ENCODE measurements at regions of chr1 and their contacts with region 1.

Region 1: DNA sequence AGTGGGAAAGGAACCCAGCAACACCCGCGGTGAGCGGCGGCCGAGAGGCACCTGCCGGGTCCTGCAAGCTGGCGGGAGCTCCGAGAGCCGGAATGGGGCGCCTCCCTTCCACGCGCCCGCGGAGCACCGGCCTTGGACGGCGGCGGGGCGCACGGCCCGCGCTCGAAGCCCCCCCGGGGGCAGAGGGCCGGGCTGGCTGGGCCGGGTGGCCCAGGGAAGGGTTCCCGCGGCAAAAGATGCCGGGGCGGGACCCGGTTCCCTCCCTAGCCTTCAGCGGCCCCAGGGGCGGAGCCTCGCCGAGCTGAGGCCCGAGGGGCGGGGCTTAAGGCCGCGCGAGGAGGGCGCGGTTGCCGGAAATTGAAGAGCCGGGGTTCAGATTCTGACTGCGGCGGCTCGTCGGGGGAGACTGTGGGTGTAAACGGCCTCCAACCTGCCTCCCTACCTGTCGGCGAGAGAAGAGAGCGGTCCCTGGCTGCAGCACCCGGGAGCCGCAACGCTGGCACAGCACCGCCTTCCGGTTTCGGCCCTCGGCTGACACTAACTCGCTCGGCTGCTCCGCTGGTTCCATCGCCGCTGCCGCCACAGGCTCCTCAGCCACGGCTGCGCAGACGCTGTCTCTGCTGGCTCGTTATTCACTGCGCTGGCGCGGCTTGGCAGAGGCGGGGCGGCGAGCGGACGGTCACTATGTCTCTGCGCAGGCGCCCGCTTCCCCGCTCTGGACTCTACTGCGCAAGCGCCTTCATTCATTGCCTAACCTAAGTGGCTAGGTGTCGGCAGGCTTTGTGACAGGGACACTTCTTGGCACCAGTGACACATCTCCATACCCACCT is at the start of gene RABIF:
- DNase-seq: peak; percentile 99
- ATAC-seq: peak; percentile 99
- total RNA-seq, gene RABIF: 6.1 TPM

Region 2: DNA sequence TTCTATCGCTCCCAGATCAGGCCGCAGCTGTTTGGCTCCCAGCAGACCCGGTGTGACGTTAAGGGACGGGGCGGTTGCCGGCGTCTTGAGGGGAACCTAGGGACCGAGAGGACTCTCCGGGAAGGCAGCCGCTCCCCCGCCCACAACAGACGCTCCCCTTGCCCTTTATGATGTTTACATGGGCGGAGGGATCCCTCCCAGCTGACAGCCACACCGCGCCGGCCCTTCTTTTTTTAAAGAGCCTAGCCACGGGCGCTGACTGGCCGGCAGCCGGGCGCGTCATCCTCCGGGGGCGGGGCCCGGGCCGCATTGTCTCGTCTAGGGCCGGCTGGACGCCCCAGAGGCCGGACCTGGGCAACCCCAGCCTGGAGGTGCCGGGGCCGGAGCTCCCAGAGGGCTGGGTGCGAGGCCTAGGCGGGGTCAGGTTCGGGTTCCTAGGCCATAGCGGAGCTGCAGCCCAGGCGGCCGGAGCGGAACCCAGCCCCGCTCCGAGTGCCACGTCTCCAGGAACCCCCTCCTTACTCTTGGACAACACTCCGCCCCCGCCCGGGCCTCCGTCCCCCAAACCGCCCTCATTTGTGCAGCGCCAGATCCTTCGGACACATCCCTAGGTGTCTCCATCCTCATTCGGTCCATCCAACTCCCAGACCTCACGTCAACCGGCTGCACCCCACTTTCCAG is 78.0 kb before region 1 on chr1 and contains the start of gene PCAT6:
- intact Hi-C with region 1: loop called (anchors 2 kb)
- DNase-seq: peak; percentile 97
- ATAC-seq: peak; percentile 96
- total RNA-seq, gene PCAT6: 0.54 TPM

Region 3: GRCh38 chr1:202821452-202821851 is 67.3 kb before region 1 on chr1:
- intact Hi-C with region 1: no loop called
- DNase-seq: no peak
- ATAC-seq: no peak

Region 4: DNA sequence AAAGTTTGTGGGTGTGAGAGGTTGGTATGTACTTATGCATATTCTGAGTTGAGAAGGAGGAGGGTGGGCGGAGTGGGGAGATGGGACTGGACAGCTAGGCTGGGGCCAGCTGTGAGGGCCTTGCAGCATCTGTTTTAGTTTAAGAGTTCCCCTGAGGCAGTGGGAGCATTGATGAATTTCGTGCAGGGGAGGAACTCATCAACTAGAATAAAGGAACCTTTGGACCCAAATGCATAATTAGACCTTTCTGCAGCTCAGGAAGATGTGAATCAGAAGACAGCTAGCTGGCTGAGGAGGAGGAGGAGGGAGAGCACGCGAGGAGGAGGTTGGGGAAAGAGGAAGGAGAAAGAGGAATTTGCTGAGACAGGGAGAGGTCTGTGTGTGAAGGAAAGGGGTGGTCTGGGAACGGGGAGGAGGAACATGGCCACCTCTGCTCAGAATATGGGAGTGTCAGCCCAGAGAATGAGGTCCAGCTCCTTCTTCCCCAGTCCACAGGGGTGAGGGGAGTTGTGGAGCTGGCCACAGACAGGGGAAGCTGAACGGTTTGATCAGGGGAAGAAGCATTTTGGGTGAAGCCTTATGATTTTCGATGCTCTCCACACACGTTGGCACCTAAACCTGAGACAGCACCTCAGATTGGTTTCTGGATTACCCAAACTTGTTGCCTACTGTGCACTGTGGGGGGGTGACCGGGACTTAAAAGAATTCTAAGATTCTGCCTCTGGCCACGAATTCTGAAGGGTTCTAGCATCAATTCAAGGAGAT is 169.3 kb after region 1 on chr1:
- intact Hi-C with region 1: no loop called
- DNase-seq: no peak
- ATAC-seq: peak; percentile 33

Measured in Right ventricle myocardium inferior (tissue), 1 donor.